IMR-90 (cell line): ENCODE measurements at regions of chr2 and their contacts with region 1.

Region 1: GRCh38 chr2:106542811-106543259 is 55.7 kb downstream of the CD8B2 start:
- DNase-seq: peak; percentile 19
- ATAC-seq: peak; percentile 100
- H3K4me3 ChIP-seq: no peak overlapping the region
- H3K27ac ChIP-seq: no peak overlapping the region
- H3K4me1 ChIP-seq: no peaks in the 10 kb centered on the region
- H3K27me3 ChIP-seq: peaks cover 6% of the 10 kb centered on the region
- CTCF ChIP-seq: peak; percentile 80
- POLR2A ChIP-seq: no peak
- RAD21 ChIP-seq: peak; percentile 82

Region 2: GRCh38 chr2:106104332-106105062 is 438.3 kb before region 1 on chr2:
- CTCF ChIA-PET with region 1: no interaction called
- POLR2A ChIA-PET with region 1: no interaction called
- dilution Hi-C with region 1: no loop called
- in situ Hi-C with region 1: loop called (anchors 10 kb)
- intact Hi-C with region 1: loop called (anchors 1 kb)
- DNase-seq: peak; percentile 66
- ATAC-seq: peak; percentile 86
- H3K4me3 ChIP-seq: no peak overlapping the region
- H3K27ac ChIP-seq: no peak overlapping the region
- H3K4me1 ChIP-seq: no peaks in the 10 kb centered on the region
- H3K27me3 ChIP-seq: no peaks in the 10 kb centered on the region
- CTCF ChIP-seq: peak; percentile 94
- POLR2A ChIP-seq: 0 out of 2 replicates have a peak, but pooled peaks have one; percentile 49
- RAD21 ChIP-seq: peak; percentile 97

Region 3: GRCh38 chr2:106257830-106258229 is 285.0 kb before region 1 on chr2:
- CTCF ChIA-PET with region 1: no interaction called
- POLR2A ChIA-PET with region 1: no interaction called
- dilution Hi-C with region 1: no loop called
- in situ Hi-C with region 1: no loop called
- intact Hi-C with region 1: loop called (anchors 5 kb)
- DNase-seq: no peak
- ATAC-seq: no peak
- H3K4me3 ChIP-seq: no peak overlapping the region
- H3K27ac ChIP-seq: no peak overlapping the region
- H3K4me1 ChIP-seq: no peaks in the 10 kb centered on the region
- H3K27me3 ChIP-seq: no peaks in the 10 kb centered on the region
- CTCF ChIP-seq: no peak
- POLR2A ChIP-seq: no peak
- RAD21 ChIP-seq: no peak